Mammary epithelial cell (primary cell): ENCODE measurements at regions of chr10 and their contacts with region 1.

Region 1: GRCh38 chr10:6401562-6402348 is 178.3 kb downstream of the PRKCQ start:
- DNase-seq: peak; percentile 82
- H3K4me3 ChIP-seq: peak overlapping the region; percentile 31 to 58 (median 39)
- H3K27ac ChIP-seq: peak overlapping the region; percentile 64
- H3K4me1 ChIP-seq: peaks cover 11% of the 10 kb centered on the region
- H3K27me3 ChIP-seq: no peaks in the 10 kb centered on the region
- CTCF ChIP-seq: peak; percentile 65 to 78

Region 2: GRCh38 chr10:5948999-5949759 is 452.6 kb before region 1 on chr10:
- CTCF ChIA-PET with region 1: no interaction called
- dilution Hi-C with region 1: no loop called
- in situ Hi-C with region 1: no loop called
- intact Hi-C with region 1: loop called (anchors 1 kb)
- DNase-seq: peak; percentile 55
- H3K4me3 ChIP-seq: no peak overlapping the region
- H3K27ac ChIP-seq: no peak overlapping the region
- H3K4me1 ChIP-seq: peaks cover 40% of the 10 kb centered on the region
- H3K27me3 ChIP-seq: no peaks in the 10 kb centered on the region
- CTCF ChIP-seq: peak; percentile 54 to 73

Region 3: GRCh38 chr10:6108603-6109443 is 292.9 kb before region 1 on chr10:
- CTCF ChIA-PET with region 1: no interaction called
- dilution Hi-C with region 1: loop called (anchors 10 kb)
- in situ Hi-C with region 1: loop called (anchors 10 kb)
- intact Hi-C with region 1: loop called (anchors 1 kb)
- DNase-seq: peak; percentile 14
- H3K4me3 ChIP-seq: no peak overlapping the region
- H3K27ac ChIP-seq: no peak overlapping the region
- H3K4me1 ChIP-seq: peaks cover 6% of the 10 kb centered on the region
- H3K27me3 ChIP-seq: no peaks in the 10 kb centered on the region
- CTCF ChIP-seq: peak; percentile 38 to 53

Region 4: DNA sequence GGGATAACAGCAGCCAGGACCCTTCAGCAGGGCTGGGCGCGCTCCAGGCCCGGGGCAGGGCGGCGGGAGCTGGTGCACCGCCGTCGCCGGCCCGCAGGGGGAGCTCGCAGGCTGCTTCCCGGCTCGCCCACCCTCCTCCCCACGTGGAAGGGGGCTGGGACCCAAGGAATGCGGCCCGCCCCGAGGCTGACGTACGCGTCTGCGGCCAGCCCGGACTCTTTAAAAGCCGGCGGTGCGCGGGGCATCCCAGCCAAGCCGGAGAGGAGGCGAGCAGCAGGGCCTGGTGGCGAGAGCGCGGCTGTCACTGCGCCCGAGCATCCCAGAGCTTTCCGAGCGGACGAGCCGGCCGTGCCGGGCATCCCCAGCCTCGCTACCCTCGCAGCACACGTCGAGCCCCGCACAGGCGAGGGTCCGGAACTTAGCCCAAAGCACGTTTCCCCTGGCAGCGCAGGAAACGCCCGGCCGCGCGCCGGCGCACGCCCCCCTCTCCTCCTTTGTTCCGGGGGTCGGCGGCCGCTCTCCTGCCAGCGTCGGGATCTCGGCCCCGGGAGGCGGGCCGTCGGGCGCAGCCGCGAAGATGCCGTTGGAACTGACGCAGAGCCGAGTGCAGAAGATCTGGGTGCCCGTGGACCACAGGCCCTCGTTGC is 198.9 kb before region 1 on chr10 and contains the start of gene PFKFB3:
- CTCF ChIA-PET with region 1: interaction called, 39 read pairs
- dilution Hi-C with region 1: no loop called
- in situ Hi-C with region 1: loop called (anchors 5 to 10 kb)
- intact Hi-C with region 1: loop called (anchors 1 kb)
- DNase-seq: peak; percentile 92
- H3K4me3 ChIP-seq: peak within 1 kb of the TSS; percentile 60 to 98 (median 94)
- H3K27ac ChIP-seq: peak within 1 kb of the TSS; percentile 90
- H3K4me1 ChIP-seq: peaks cover 28% of the 10 kb centered on the region
- H3K27me3 ChIP-seq: no peaks in the 10 kb centered on the region
- CTCF ChIP-seq: peak; percentile 69 to 92
- total RNA-seq, gene PFKFB3: 24.0 to 49.5 TPM

Region 5: GRCh38 chr10:6247041-6247712 is 154.6 kb before region 1 on chr10:
- CTCF ChIA-PET with region 1: interaction called, 10 read pairs
- dilution Hi-C with region 1: no loop called
- in situ Hi-C with region 1: no loop called
- intact Hi-C with region 1: no loop called
- DNase-seq: no peak
- H3K4me3 ChIP-seq: no peak overlapping the region
- H3K27ac ChIP-seq: no peak overlapping the region
- H3K4me1 ChIP-seq: no peaks in the 10 kb centered on the region
- H3K27me3 ChIP-seq: no peaks in the 10 kb centered on the region
- CTCF ChIP-seq: no peak

Region 6: DNA sequence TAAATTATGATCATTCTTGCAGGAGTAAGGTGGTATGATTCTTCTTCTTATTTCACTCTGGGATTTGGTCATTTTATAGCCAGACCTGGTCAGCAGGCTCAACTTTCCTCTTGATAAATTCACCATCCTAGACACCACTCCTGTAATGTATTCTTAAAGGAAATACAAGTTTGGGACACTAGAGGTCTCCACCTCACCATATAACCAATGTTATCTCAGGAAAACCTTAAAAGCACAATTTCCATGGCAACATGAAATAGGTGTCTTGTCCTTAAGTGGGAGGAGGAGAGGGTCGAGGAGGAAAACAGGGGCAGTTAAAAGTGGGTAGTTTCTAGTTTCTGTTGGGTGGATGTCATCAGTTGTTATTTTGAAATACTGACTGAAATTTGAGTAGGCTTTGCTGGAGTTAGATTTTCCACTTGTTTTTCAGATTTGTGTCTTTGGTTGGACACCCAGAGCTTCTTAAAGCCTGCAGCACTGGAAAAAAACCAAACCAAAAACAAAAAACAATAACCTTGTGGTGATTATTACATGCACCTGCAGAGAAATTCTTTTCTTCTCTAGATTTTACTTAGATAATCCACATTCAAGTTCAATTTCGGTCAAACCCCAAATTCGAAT is 15.2 kb after region 1 on chr10:
- CTCF ChIA-PET with region 1: interaction called, 30 read pairs
- dilution Hi-C with region 1: no loop called
- in situ Hi-C with region 1: no loop called
- intact Hi-C with region 1: no loop called
- DNase-seq: peak; percentile 31
- H3K4me3 ChIP-seq: no peak overlapping the region
- H3K27ac ChIP-seq: no peak overlapping the region
- H3K4me1 ChIP-seq: no peaks in the 10 kb centered on the region
- H3K27me3 ChIP-seq: no peaks in the 10 kb centered on the region
- CTCF ChIP-seq: peak; percentile 64 to 70